ENCODE measurements at regions of chr13 and their contacts with region 1.

Region 1: GRCh38 chr13:34931572-34931971 is 10.5 kb upstream of the NBEA start:
- DNase-seq: peak; percentile 6
- ATAC-seq: no peak
- H3K4me3 ChIP-seq: no peak overlapping the region
- H3K27ac ChIP-seq: no peak overlapping the region
- H3K4me1 ChIP-seq: peaks cover 21% of the 10 kb centered on the region
- H3K27me3 ChIP-seq: no peaks in the 10 kb centered on the region
- CTCF ChIP-seq: no peak

Region 2: GRCh38 chr13:34857558-34858325 is 73.8 kb before region 1 on chr13:
- CTCF ChIA-PET with region 1: no interaction called
- POLR2A ChIA-PET with region 1: no interaction called
- intact Hi-C with region 1: loop called (anchors 10 kb)
- DNase-seq: no peak
- ATAC-seq: no peak
- H3K4me3 ChIP-seq: no peak overlapping the region
- H3K27ac ChIP-seq: no peak overlapping the region
- H3K4me1 ChIP-seq: no peaks in the 10 kb centered on the region; the same call in 1 of the 2 replicates
- H3K27me3 ChIP-seq: no peaks in the 10 kb centered on the region
- CTCF ChIP-seq: no peak